ENCODE measurements at regions of chr7 and their contacts with region 1.

Region 1: DNA sequence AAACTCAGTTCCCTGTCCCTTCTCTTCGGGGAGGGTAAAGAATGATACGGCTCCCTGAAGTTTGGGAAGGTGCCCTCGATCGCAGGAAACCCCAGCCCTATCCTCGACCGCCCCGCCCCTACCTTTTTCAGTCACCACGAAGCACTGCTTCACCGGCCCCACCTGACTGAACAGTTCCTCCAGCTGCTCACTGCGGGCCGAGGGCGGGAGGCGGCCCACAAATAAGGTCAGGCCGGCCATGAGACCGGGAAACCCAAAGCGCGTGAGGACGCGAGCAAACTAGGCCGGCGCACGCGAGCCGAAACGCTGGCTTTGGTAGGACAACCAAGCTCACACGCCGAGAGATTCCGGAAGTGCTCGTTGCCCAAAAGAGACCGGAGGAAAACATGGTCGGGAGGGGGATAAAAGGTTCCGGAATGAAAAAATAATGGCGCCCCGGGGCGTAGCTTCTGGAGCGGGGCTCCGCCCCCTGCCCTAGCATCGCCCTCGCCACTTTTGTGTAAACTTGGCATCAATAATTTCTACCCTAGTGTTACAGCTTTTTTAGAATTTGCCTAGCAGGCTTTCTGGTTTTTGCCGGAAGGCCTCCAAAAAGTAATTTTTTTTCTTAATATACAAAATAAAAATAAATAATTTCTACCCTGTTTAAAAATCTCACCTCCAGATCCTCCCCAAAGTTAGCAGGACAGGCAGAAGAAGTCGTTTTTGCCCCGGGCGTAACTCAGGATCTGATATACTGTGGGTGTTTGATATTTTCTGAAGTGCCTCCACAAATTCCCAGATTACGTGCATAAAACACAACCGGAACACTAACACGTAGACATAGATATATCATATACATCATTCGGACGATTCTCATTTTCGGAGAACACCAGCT is at the start of gene RBM28:
- DNase-seq: peak; percentile 83
- H3K4me3 Mint-ChIP-seq: peak within 1 kb of the TSS; percentile 95
- H3K27ac Mint-ChIP-seq: peak within 1 kb of the TSS; percentile 89
- H3K4me1 Mint-ChIP-seq: peaks cover 30% of the 10 kb centered on the region
- H3K27me3 Mint-ChIP-seq: peaks cover 16% of the 10 kb centered on the region
- total RNA-seq, gene RBM28: 77.0 and 80.1 TPM in 2 replicates

Region 2: GRCh38 chr7:127585044-127585953 is 758.5 kb before region 1 on chr7 and contains the start of gene GCC1:
- intact Hi-C with region 1: loop called (anchors 2 kb)
- DNase-seq: peak; percentile 92
- H3K4me3 Mint-ChIP-seq: peak within 1 kb of the TSS; percentile 95
- H3K27ac Mint-ChIP-seq: peak within 1 kb of the TSS; percentile 89
- H3K4me1 Mint-ChIP-seq: peaks cover 59% of the 10 kb centered on the region
- H3K27me3 Mint-ChIP-seq: peaks cover 3% of the 10 kb centered on the region
- total RNA-seq, gene GCC1: 16.8 and 17.4 TPM in 2 replicates

Region 3: GRCh38 chr7:128135515-128136214 is 208.1 kb before region 1 on chr7:
- intact Hi-C with region 1: loop called (anchors 10 kb)
- DNase-seq: peak; percentile 53
- H3K4me3 Mint-ChIP-seq: peak overlapping the region; percentile 77
- H3K27ac Mint-ChIP-seq: no peak overlapping the region
- H3K4me1 Mint-ChIP-seq: peaks cover 14% of the 10 kb centered on the region
- H3K27me3 Mint-ChIP-seq: peaks cover 60% of the 10 kb centered on the region

Region 4: GRCh38 chr7:128387216-128388144 is 43.7 kb after region 1 on chr7:
- intact Hi-C with region 1: loop called (anchors 1 kb)
- DNase-seq: peak; percentile 43
- H3K4me3 Mint-ChIP-seq: no peak overlapping the region
- H3K27ac Mint-ChIP-seq: no peak overlapping the region
- H3K4me1 Mint-ChIP-seq: no peaks in the 10 kb centered on the region
- H3K27me3 Mint-ChIP-seq: no peaks in the 10 kb centered on the region

Region 5: GRCh38 chr7:128455551-128456254 is 111.9 kb after region 1 on chr7 and contains the start of gene HILPDA:
- intact Hi-C with region 1: loop called (anchors 1 kb)
- DNase-seq: peak; percentile 95
- H3K4me3 Mint-ChIP-seq: peak within 1 kb of the TSS; percentile 96
- H3K27ac Mint-ChIP-seq: peak within 1 kb of the TSS; percentile 99
- H3K4me1 Mint-ChIP-seq: peaks cover 67% of the 10 kb centered on the region
- H3K27me3 Mint-ChIP-seq: peaks cover 16% of the 10 kb centered on the region
- total RNA-seq, gene HILPDA: 53.7 and 56.9 TPM in 2 replicates

Region 6: DNA sequence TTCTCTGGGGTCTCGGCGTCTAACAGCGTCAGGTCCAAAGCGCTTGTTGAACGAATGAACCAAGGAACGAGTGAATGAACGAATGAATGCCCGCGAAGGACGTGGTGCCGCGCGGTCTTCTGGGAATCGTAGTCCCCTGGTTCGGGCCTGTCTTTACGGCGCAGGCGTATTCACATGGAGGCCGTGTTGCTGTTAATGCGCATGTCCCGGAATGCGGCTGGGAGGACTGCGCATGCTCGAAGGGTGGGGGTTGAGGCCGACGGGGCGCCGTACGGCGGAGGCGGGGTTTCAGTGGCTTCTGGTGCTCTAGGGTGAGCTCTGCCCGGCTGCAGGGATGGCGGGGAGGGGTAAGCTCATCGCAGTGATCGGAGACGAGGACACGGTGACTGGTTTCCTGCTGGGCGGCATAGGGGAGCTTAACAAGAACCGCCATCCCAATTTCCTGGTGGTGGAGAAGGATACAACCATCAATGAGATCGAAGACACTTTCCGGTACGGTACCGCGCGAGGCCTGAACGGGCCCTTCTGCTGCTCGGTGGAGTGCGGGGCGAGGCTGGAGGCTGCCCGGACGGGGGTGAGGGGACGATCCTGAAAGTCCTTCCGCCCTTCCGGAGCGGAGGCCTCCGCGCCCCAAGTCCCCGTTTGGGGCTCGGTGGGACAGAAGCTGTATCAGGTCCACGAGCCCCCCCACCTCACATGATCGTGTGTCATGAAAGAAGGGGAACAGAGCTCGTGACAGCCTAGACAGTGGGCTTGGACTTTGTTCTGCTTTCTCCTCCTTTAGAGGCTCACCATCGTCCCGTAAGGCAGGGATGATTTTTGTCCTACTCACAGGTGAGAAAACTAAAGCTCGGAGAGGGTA is 519.0 kb after region 1 on chr7 and contains the start of gene ATP6V1F:
- intact Hi-C with region 1: loop called (anchors 2 kb)
- DNase-seq: peak; percentile 99
- H3K4me3 Mint-ChIP-seq: peak within 1 kb of the TSS; percentile 99
- H3K27ac Mint-ChIP-seq: peak within 1 kb of the TSS; percentile 96
- H3K4me1 Mint-ChIP-seq: peaks cover 19% of the 10 kb centered on the region
- H3K27me3 Mint-ChIP-seq: no peaks in the 10 kb centered on the region
- total RNA-seq, gene ATP6V1F: 131 and 134 TPM in 2 replicates

Measured in activated T-helper 1 cell treated with anti-CD3 and anti-CD28 coated beads, Interleukin-12 subunit alpha, Interleukin-12 subunit beta, Interleukin-2, Interleukin-4 antibody, amounts not matched to agents 30 ng/mL and 10 ng/mL and 1 ng/mL, durations not matched to agents 14 hours and 24 hours and 36 hours (primary cell).